Vagina (tissue), 2 donors: ENCODE measurements at regions of chr7 and their contacts with region 1.

Region 1: DNA sequence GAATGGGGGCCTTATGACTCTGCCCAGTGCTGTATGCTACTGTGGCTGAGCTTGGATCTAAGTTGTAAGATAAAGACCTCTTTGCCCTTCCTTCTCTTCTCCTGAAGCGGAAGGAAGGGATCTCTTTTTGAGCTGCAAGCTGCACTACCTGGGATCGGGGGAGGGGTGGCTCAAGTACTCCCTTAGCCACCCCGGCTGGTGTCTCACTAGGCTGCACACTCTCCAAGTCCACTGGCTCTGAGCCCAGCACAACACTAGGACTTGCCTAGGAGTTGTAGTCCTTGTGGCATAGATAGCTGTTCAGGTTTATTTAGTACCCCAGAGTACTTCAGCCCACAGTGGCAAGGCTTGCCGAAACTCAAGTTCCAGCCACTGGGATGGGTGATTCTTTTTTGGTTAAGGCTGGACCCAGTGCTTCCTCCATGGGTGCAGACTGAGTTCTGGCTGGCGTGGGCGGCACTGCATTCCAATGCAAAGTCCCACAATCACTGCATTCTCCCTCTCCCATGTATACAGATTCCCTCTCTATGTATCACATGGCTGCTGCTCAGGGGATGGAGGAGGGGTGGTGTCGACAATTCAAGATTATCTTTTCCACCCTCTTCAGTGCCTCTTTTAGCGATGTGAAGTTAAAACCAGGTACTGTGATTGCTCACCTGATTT is 76.2 kb upstream of the SLC25A13 start:
- DNase-seq: no peak
- H3K4me3 ChIP-seq: no peak overlapping the region
- H3K27ac ChIP-seq: no peak overlapping the region
- H3K4me1 ChIP-seq: no peaks in the 10 kb centered on the region
- H3K27me3 ChIP-seq: no peaks in the 10 kb centered on the region
- CTCF ChIP-seq: no peak
- POLR2A ChIP-seq: no peak

Region 2: GRCh38 chr7:96430356-96430755 is 32.3 kb after region 1 on chr7:
- intact Hi-C with region 1: loop called (anchors 2 kb)
- DNase-seq: no peak
- H3K4me3 ChIP-seq: no peak overlapping the region
- H3K27ac ChIP-seq: no peak overlapping the region
- H3K4me1 ChIP-seq: no peaks in the 10 kb centered on the region
- H3K27me3 ChIP-seq: no peaks in the 10 kb centered on the region
- CTCF ChIP-seq: no peak
- POLR2A ChIP-seq: no peak

Region 3: DNA sequence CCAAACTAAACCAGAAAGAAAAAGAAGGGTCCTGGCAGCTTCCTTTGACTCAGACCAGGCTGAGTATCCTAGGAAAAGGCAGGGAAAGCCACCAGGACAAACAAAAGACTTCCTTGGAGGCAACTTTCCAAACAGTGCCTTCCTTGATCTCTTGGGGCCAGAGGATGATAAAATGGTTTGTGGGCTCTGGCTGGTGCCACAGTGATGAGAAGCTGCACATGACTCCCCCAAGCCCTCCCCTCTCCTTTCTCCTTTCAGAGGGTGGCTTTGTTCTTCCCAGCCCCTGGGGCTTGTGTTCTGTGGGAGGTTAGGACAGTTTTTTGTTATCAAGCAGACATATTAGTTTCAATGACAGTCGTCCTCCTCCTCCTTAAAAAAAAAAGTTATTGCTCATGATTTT is 128.4 kb after region 1 on chr7:
- intact Hi-C with region 1: no loop called
- DNase-seq: no peak
- H3K4me3 ChIP-seq: no peak overlapping the region
- H3K27ac ChIP-seq: no peak overlapping the region
- H3K4me1 ChIP-seq: no peaks in the 10 kb centered on the region
- H3K27me3 ChIP-seq: no peaks in the 10 kb centered on the region
- CTCF ChIP-seq: no peak
- POLR2A ChIP-seq: no peak